Thyroid gland (tissue), 4 donors: ENCODE measurements at regions of chr2 and their contacts with region 1.

Region 1: DNA sequence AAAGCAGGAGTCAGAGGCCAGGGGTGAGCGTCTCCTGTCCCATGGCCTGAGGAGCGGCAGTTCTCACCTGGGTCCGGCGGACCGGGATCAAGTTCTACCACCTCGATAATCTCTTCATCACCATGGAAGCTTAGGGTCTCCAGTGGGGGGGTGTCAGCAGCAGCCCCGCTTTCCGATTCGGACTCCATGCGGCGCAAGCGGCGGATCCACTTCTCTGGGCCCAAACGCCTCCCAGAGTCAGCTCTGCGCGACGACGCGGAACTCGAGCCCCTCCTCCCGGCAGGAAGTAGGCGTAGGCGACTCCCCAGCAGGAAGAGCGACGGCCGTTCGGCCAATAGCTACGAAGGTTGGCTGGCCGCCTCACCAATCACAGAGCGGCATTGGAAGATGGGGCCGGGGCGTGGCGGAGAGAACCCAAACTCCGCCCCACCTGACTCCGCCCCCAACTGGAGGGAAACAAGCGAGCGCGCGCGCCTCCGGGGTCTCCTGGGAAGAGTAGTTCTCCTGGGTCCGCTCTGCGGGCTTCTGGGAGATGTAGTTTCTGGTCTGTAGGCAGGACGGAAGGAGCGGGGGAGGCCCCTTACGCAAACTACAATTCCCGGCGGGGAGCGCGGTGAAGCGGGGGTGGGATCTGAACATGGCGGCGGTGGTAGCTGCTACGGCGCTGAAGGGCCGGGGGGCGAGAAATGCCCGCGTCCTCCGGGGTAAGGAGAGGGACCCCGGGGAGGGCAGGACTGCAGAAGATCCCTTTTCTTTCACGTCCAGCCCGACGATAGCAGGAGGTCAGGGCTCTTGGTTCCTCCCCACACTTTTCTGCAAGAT is at the starts of genes AAMP and PNKD:
- DNase-seq: peak; percentile 100
- H3K4me3 ChIP-seq: peak within 1 kb of the TSS; percentile 29 to 88 (median 85)
- H3K27ac ChIP-seq: peak within 1 kb of the TSS; percentile 55 to 84 (median 83)
- H3K4me1 ChIP-seq: peaks cover 32 to 46% of the 10 kb centered on the region in 2 donors
- H3K27me3 ChIP-seq: no peaks in the 10 kb centered on the region
- CTCF ChIP-seq: peak in 1 of 6 experiments; percentile 13
- POLR2A ChIP-seq: peak in 1 of 2 donors; percentile 79
- total RNA-seq, gene AAMP: 86.9 to 175 (median 121) TPM
- total RNA-seq, gene PNKD: 57.0 to 110 (median 81.8) TPM

Region 2: GRCh38 chr2:218216674-218217359 is 53.3 kb before region 1 on chr2 and contains the start of gene ARPC2:
- intact Hi-C with region 1: loop called (anchors 10 kb)
- DNase-seq: peak; percentile 93 to 95
- H3K4me3 ChIP-seq: peak within 1 kb of the TSS; percentile 86 to 99 (median 95)
- H3K27ac ChIP-seq: peak within 1 kb of the TSS; percentile 82 to 95 (median 91)
- H3K4me1 ChIP-seq: peaks cover 30 to 40% of the 10 kb centered on the region in 2 donors
- H3K27me3 ChIP-seq: no peaks in the 10 kb centered on the region
- CTCF ChIP-seq: peak in 4 of 6 experiments; percentile 17 to 42 (median 26)
- POLR2A ChIP-seq: peak in 1 of 2 donors; percentile 92
- total RNA-seq, gene ARPC2: 157 to 219 (median 170) TPM

Region 3: GRCh38 chr2:218399391-218400166 is 129.5 kb after region 1 on chr2 and contains the start of gene CTDSP1:
- intact Hi-C with region 1: loop called (anchors 5 kb)
- DNase-seq: peak; percentile 98 to 99
- H3K4me3 ChIP-seq: peak within 1 kb of the TSS; percentile 43 to 100 (median 100)
- H3K27ac ChIP-seq: peak within 1 kb of the TSS; percentile 99 to 100 (median 99)
- H3K4me1 ChIP-seq: peaks cover 41 to 48% of the 10 kb centered on the region in 2 donors
- H3K27me3 ChIP-seq: no peaks in the 10 kb centered on the region
- CTCF ChIP-seq: peak in 3 of 6 experiments; percentile 18 to 34 (median 20)
- POLR2A ChIP-seq: peak; percentile 71 to 87
- total RNA-seq, gene CTDSP1: 105 to 152 (median 127) TPM